Left lung (tissue), 14 donors: ENCODE measurements at regions of chr18 and their contacts with region 1.

Region 1: GRCh38 chr18:59823596-59824195 is 76.1 kb upstream of the PMAIP1 start:
- DNase-seq: peak in 3 of 4 donors; percentile 44 to 90 (median 84)
- ATAC-seq: peak; percentile 96
- H3K4me3 ChIP-seq: no peak overlapping the region
- H3K27ac ChIP-seq: peak overlapping the region in 1 of 2 donors; percentile 5
- H3K4me1 ChIP-seq: no peaks in the 10 kb centered on the region
- H3K27me3 ChIP-seq: peaks cover 0 to 7% of the 10 kb centered on the region in 2 donors
- CTCF ChIP-seq: peak; percentile 49 to 70

Region 2: DNA sequence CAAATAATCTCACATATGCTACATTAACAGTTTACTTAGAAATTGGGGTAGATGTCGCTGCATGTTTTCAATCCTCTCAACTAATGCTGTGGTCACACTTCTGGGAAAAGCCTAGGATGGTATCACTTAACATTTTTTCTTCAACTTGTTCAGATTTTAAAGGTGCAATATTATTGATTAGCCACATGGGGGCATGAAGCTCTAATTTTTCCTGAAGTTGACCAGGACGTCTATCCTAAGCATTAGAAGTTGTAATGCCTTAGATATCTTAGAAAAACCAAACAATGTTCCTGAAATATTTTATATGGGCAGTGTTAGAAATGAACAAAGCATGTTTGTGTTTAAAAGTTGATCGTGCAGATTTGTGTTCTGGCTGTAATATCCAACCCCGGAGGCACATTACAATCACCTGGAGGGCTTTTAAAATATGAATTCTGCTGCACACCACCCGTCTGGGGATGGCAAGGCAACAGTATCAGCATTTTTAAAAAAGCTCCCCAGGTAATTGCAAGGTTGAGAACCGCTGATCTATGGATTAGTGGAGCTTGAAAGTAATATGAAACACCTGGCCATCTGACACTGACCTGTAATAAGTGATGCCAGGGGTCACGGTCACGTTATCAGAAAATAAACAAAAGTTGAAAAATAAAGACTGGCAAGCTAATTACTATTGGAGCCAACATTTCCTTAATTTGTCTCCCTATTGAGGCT is 364.2 kb before region 1 on chr18:
- intact Hi-C with region 1: loop called in 1 of 2 experiments (anchors 10 kb)
- DNase-seq: peak in 1 of 4 donors; percentile 55
- ATAC-seq: peak; percentile 87
- H3K4me3 ChIP-seq: no peak overlapping the region
- H3K27ac ChIP-seq: no peak overlapping the region
- H3K4me1 ChIP-seq: no peaks in the 10 kb centered on the region
- H3K27me3 ChIP-seq: peaks cover 0 to 12% of the 10 kb centered on the region in 2 donors
- CTCF ChIP-seq: peak; percentile 11 to 36